GM10248 (cell line): ENCODE measurements at regions of chr19 and their contacts with region 1.

Region 1: DNA sequence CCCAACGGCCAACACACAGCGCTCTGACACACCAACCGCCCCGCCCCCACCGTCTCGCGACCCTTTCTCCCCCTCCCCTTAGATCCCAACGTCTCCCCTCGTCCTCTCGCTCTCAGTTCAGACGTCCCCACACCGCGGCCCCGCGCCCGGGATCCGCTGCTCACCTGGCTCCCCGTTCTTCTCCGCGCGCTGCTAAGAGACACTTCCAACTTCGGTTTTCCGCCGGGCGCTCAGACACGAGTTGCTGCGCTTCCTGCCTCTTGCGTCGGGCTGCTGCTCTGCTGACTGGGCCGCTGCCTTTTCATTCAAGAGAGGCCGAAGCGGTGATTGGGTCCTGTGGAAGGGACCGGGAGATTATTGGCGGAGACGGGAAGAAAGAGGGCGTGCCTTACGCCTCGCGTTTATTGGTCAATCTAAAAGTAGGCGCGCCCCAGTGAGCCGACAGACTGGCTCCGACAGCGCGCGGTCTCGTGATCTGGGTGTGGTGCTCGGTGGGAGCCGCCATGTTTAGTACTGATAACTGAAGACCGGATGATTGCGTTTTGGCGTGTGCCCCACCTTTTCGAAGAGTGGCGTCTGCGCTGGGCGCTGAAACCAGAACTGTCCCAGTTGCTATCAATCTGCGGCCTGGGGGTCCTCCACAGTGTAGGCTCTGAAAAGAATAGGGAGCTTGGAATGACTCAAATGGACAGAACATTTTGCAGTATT is at the start of gene DDX39A:
- DNase-seq: peak; percentile 97
- CTCF ChIP-seq: no peak

Region 2: DNA sequence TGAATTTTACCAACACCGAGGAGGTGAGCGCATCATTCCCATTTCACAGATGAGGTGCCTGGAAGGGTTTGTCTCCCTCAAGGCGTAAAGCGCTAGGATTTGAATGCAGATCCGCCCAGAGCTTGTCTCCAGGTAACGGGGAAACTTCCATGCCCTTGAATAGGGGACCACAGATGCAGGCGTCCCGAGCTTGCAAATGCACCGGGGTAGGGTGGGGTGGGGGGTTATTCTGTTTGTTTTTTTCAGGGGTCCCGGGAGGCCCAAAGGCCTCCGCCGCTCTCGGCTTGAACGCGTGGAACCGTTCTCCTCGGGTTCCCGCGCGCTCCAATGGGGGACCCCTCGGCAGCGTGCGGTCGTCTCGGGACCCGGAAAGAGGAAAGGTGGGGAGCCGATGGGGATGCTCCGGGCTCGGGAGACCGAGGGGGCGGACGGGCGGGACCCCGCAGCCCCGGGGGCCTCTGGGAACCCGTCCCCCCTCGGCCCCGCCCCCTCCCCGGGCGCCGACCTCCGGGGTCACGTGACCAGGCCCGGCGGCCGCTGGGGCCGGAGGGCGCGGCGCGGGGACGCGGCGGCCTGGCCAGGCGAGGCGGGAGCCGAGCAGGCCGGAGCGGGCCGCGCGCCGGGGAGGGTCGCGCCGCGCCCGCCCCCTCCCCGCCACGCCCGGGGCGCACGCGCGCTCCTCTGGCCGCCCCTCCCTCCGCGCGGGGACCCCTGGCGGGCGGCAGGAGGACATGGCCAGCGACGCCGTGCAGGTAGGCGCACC is 13.7 kb after region 1 on chr19 and contains the start of gene PKN1:
- CTCF ChIA-PET with region 1: interaction called, 10 read pairs
- POLR2A ChIA-PET with region 1: interaction called, 7 read pairs
- DNase-seq: peak; percentile 90
- CTCF ChIP-seq: no peak

Region 3: GRCh38 chr19:14459703-14460102 is 40.4 kb after region 1 on chr19:
- CTCF ChIA-PET with region 1: no interaction called
- POLR2A ChIA-PET with region 1: no interaction called
- DNase-seq: no peak
- CTCF ChIP-seq: no peak